AG04450 (cell line): ENCODE measurements at regions of chr14 and their contacts with region 1.

Region 1: GRCh38 chr14:61461808-61462275 is 140.5 kb downstream of the PRKCH start:
- DNase-seq: peak; percentile 64
- H3K4me3 ChIP-seq: no peak overlapping the region
- H3K27ac ChIP-seq: no peak overlapping the region
- H3K27me3 ChIP-seq: peaks cover 2% of the 10 kb centered on the region
- CTCF ChIP-seq: peak; percentile 63

Region 2: GRCh38 chr14:61321385-61322010 is 140.3 kb before region 1 on chr14 and contains the start of gene PRKCH:
- CTCF ChIA-PET with region 1: no interaction called
- POLR2A ChIA-PET with region 1: no interaction called
- DNase-seq: no peak
- H3K4me3 ChIP-seq: peak within 1 kb of the TSS; percentile 52
- H3K27ac ChIP-seq: no peak within 1 kb of the TSS
- H3K27me3 ChIP-seq: peaks cover 43% of the 10 kb centered on the region
- CTCF ChIP-seq: 0 out of 2 replicates have a peak, but pooled peaks have one; percentile 4
- polyA plus RNA-seq, gene PRKCH: 1.0 and 1.6 TPM in 2 replicates

Region 3: GRCh38 chr14:61438860-61439684 is 22.8 kb before region 1 on chr14:
- CTCF ChIA-PET with region 1: no interaction called
- POLR2A ChIA-PET with region 1: no interaction called
- DNase-seq: no peak
- H3K4me3 ChIP-seq: no peak overlapping the region
- H3K27ac ChIP-seq: no peak overlapping the region
- H3K27me3 ChIP-seq: peaks cover 8% of the 10 kb centered on the region
- CTCF ChIP-seq: no peak

Region 4: DNA sequence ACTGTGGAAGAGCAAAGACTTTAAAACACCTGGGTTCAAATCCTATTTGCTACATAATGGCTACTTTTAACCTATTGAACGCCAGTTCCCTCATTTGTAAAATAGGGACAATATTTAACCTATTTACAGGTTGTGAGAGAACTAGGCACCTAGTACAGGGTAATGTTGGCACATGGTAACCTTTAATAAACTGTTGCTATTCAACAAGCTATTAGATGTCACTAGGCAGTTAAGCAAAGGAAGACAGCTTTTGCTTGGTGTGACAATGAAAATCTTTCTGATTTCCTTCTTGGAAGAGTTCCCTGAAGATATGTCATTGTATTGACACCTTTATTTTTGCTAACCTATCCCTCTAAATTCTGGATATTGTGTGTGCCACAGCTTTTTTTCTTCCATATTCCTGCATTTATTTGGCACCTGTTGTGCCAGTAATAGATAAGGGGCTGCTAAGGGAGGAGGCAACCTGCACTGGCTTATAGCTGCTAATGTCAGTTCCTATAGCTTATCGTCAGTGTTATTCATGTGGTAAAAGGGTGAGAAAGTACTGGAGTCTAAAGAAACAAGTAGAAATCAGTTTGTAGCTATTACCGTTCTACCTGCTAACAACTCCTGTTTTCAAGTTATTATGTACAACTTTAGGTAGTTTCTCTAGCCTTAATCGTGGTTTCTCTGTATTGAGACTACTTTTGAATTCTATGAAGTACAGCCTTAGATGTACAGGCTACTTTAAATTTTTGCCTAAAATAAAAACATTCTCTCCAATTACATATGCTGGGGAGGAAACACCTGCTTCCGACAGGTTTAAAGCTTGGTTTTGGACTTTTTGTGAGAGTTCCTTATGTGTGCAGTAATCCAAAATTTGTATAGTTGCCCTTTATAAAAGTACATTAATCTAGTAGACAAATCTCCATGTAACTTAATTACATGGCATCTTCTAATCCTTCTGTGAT is 257.8 kb after region 1 on chr14:
- CTCF ChIA-PET with region 1: interaction called, 14 read pairs
- POLR2A ChIA-PET with region 1: no interaction called
- DNase-seq: no peak
- H3K4me3 ChIP-seq: no peak overlapping the region
- H3K27ac ChIP-seq: no peak overlapping the region
- H3K27me3 ChIP-seq: no peaks in the 10 kb centered on the region
- CTCF ChIP-seq: no peak

Region 5: GRCh38 chr14:61730756-61731373 is 269.0 kb after region 1 on chr14:
- CTCF ChIA-PET with region 1: interaction called, 15 read pairs
- POLR2A ChIA-PET with region 1: no interaction called
- DNase-seq: no peak
- H3K4me3 ChIP-seq: no peak overlapping the region
- H3K27ac ChIP-seq: no peak overlapping the region
- H3K27me3 ChIP-seq: no peaks in the 10 kb centered on the region
- CTCF ChIP-seq: peak; percentile 49

Region 6: GRCh38 chr14:61761959-61762786 is 300.3 kb after region 1 on chr14 and contains the start of gene SNAPC1:
- CTCF ChIA-PET with region 1: interaction called, 10 read pairs
- POLR2A ChIA-PET with region 1: no interaction called
- DNase-seq: peak; percentile 97
- H3K4me3 ChIP-seq: peak within 1 kb of the TSS; percentile 95
- H3K27ac ChIP-seq: peak within 1 kb of the TSS; percentile 58
- H3K27me3 ChIP-seq: no peaks in the 10 kb centered on the region
- CTCF ChIP-seq: no peak
- polyA plus RNA-seq, gene SNAPC1: 11.3 and 18.6 TPM in 2 replicates